ENCODE measurements at regions of chr12 and their contacts with region 1.

Region 1: GRCh38 chr12:116703214-116703795 is 34.6 kb downstream of the SPRING1 start:
- DNase-seq: peak; percentile 66
- ATAC-seq: peak; percentile 94
- H3K4me3 ChIP-seq: no peak overlapping the region
- H3K27ac ChIP-seq: no peak overlapping the region; the same call in 1 of the 2 replicates
- H3K4me1 ChIP-seq: no peaks in the 10 kb centered on the region
- H3K27me3 ChIP-seq: no peaks in the 10 kb centered on the region
- CTCF ChIP-seq: peak; percentile 96

Region 2: DNA sequence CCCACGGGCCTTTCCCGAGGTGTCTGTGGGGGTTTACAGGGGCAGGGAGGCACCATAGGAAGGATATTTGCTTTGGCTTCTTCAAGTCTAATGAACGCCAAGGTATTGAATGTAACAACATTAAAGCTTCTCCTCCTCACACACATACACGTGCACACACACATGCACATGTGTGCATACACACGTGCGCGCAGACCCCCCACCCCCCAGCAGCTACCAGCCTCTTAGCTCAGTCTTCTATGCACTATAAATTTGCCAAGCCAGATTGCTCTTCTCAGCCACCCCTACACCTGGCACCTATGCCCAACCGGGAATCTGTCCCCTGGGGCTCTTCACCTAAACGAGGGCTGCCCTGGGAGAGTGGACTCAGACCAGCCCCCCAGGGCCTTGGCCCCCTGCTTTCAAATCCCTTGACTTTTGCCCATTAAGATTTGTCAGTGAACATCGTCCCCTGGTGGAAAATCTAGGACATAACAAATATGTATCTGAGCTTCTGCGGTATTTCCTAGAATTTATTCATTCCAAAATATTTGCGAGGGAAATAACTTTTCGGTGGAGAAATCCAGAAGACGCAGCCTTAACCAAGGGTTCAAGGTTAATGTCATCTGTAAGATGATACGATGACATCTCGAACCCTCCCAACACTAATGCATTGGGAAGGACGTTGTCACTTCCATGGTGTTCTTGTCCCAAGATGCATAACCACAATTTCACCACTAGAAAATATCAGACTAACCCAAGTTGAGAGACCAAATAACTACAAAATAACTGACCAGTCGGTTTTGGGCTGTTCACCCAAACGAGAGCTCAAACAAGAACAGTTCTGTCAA is 756.2 kb before region 1 on chr12:
- CTCF ChIA-PET with region 1: no interaction called
- POLR2A ChIA-PET with region 1: no interaction called
- in situ Hi-C with region 1: no loop called
- intact Hi-C with region 1: loop called (anchors 10 kb)
- DNase-seq: no peak
- ATAC-seq: no peak
- H3K4me3 ChIP-seq: no peak overlapping the region
- H3K27ac ChIP-seq: no peak overlapping the region
- H3K4me1 ChIP-seq: no peaks in the 10 kb centered on the region
- H3K27me3 ChIP-seq: no peaks in the 10 kb centered on the region
- CTCF ChIP-seq: peak; percentile 87

Region 3: GRCh38 chr12:116369921-116370404 is 333.3 kb before region 1 on chr12:
- CTCF ChIA-PET with region 1: no interaction called
- POLR2A ChIA-PET with region 1: no interaction called
- in situ Hi-C with region 1: no loop called
- intact Hi-C with region 1: no loop called
- DNase-seq: no peak
- ATAC-seq: no peak
- H3K4me3 ChIP-seq: no peak overlapping the region
- H3K27ac ChIP-seq: peak overlapping the region; percentile 68; the same call in 1 of the 2 replicates
- H3K4me1 ChIP-seq: peaks cover 43% of the 10 kb centered on the region
- H3K27me3 ChIP-seq: no peaks in the 10 kb centered on the region
- CTCF ChIP-seq: no peak

Region 4: GRCh38 chr12:116551952-116552772 is 151.1 kb before region 1 on chr12:
- CTCF ChIA-PET with region 1: no interaction called
- POLR2A ChIA-PET with region 1: no interaction called
- in situ Hi-C with region 1: no loop called
- intact Hi-C with region 1: no loop called
- DNase-seq: no peak
- ATAC-seq: no peak
- H3K4me3 ChIP-seq: no peak overlapping the region
- H3K27ac ChIP-seq: peak overlapping the region; percentile 15; the same call in 1 of the 2 replicates
- H3K4me1 ChIP-seq: no peaks in the 10 kb centered on the region
- H3K27me3 ChIP-seq: no peaks in the 10 kb centered on the region
- CTCF ChIP-seq: no peak

Region 5: GRCh38 chr12:116774020-116774419 is 70.7 kb after region 1 on chr12:
- CTCF ChIA-PET with region 1: no interaction called
- POLR2A ChIA-PET with region 1: interaction called, 12 read pairs
- in situ Hi-C with region 1: no loop called
- intact Hi-C with region 1: no loop called
- DNase-seq: no peak
- ATAC-seq: no peak
- H3K4me3 ChIP-seq: no peak overlapping the region
- H3K27ac ChIP-seq: no peak overlapping the region
- H3K4me1 ChIP-seq: no peaks in the 10 kb centered on the region
- H3K27me3 ChIP-seq: no peaks in the 10 kb centered on the region
- CTCF ChIP-seq: no peak

Region 6: GRCh38 chr12:116880817-116881324 is 177.6 kb after region 1 on chr12:
- CTCF ChIA-PET with region 1: no interaction called
- POLR2A ChIA-PET with region 1: no interaction called
- in situ Hi-C with region 1: no loop called
- intact Hi-C with region 1: loop called (anchors 5 kb)
- DNase-seq: no peak
- ATAC-seq: peak; percentile 88
- H3K4me3 ChIP-seq: peak overlapping the region; percentile 39 to 59
- H3K27ac ChIP-seq: no peak overlapping the region
- H3K4me1 ChIP-seq: peaks cover 18% of the 10 kb centered on the region
- H3K27me3 ChIP-seq: peaks cover 30% of the 10 kb centered on the region
- CTCF ChIP-seq: peak; percentile 66

Region 7: GRCh38 chr12:117025481-117026151 is 322.3 kb after region 1 on chr12:
- CTCF ChIA-PET with region 1: no interaction called
- POLR2A ChIA-PET with region 1: no interaction called
- in situ Hi-C with region 1: no loop called
- intact Hi-C with region 1: loop called (anchors 10 kb)
- DNase-seq: peak; percentile 7
- ATAC-seq: peak; percentile 93
- H3K4me3 ChIP-seq: no peak overlapping the region
- H3K27ac ChIP-seq: no peak overlapping the region
- H3K4me1 ChIP-seq: no peaks in the 10 kb centered on the region
- H3K27me3 ChIP-seq: no peaks in the 10 kb centered on the region
- CTCF ChIP-seq: peak; percentile 92

Measured in Panc1 (cell line).